B cell (primary cell): ENCODE measurements at regions of chr1 and their contacts with region 1.

Region 1: GRCh38 chr1:110407260-110408210 is at the start of gene LAMTOR5:
- DNase-seq: peak; percentile 94
- ATAC-seq: peak; percentile 92
- H3K4me3 ChIP-seq: peak within 1 kb of the TSS; percentile 76 to 99 (median 90)
- H3K4me3 Mint-ChIP-seq: peak within 1 kb of the TSS; percentile 100
- H3K27ac ChIP-seq: peak within 1 kb of the TSS; percentile 87 to 90
- H3K27ac Mint-ChIP-seq: peak within 1 kb of the TSS; percentile 99
- H3K4me1 ChIP-seq: peaks cover 18 to 23% of the 10 kb centered on the region in 2 donors
- H3K4me1 Mint-ChIP-seq: peaks cover 25% of the 10 kb centered on the region
- H3K27me3 ChIP-seq: no peaks in the 10 kb centered on the region
- H3K27me3 Mint-ChIP-seq: no peaks in the 10 kb centered on the region
- CTCF ChIP-seq: peak; percentile 23
- total RNA-seq, gene LAMTOR5: 145 and 151 TPM in 2 replicates

Region 2: DNA sequence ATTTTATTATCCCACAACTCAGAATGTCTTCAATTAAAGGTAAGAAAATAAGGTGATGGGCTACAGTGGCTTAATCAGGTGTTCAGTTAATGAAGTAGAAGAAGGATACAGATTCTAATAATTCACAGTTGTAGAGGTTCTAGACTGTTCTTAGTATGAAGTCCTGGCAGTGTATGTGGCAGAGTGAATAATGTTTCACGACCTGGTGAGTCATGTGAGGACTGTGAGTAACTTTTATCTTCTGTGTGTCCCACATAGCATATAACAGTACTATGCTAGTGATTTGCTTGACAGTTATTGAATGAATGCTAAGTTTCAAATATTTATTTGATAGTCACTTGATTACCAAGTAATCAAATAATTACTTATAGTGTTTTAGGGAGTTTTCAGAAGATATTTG is 36.7 kb before region 1 on chr1:
- CTCF ChIA-PET with region 1: interaction called, 117 read pairs
- POLR2A ChIA-PET with region 1: no interaction called
- intact Hi-C with region 1: loop called (anchors 5 kb)
- DNase-seq: no peak
- ATAC-seq: no peak
- H3K4me3 ChIP-seq: no peak overlapping the region
- H3K4me3 Mint-ChIP-seq: no peak overlapping the region
- H3K27ac ChIP-seq: no peak overlapping the region
- H3K27ac Mint-ChIP-seq: no peak overlapping the region
- H3K4me1 ChIP-seq: no peaks in the 10 kb centered on the region
- H3K4me1 Mint-ChIP-seq: no peaks in the 10 kb centered on the region
- H3K27me3 ChIP-seq: no peaks in the 10 kb centered on the region
- H3K27me3 Mint-ChIP-seq: no peaks in the 10 kb centered on the region
- CTCF ChIP-seq: no peak

Region 3: DNA sequence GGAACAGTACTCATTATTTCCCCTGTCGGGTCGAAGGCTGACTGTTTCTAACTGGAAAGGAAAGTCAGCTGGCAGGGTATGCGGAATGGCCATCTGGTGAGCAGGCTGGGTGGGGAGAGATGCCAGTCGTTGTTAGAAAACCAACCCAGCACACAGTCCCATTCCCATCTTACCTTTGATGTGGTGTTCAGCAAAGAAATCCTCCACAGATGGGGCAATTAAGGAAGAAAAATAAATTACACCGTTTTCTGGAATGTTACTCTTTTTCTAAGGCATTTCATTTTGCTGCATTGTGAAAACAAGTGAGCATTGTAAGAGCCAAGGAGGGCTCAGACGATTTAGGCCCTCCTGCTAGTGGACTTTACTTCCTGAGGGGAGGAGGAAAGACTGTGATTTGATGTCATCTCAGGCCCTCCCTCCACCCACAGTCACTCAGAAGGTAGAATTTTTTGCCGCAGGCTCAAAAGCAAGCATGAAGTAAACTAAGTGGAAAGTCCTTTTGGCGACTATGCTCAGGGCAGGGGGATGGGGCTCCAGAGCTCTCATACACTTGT is 16.8 kb before region 1 on chr1 and contains the start of gene SLC16A4:
- CTCF ChIA-PET with region 1: interaction called, 117 read pairs
- POLR2A ChIA-PET with region 1: interaction called, 28 read pairs
- intact Hi-C with region 1: loop called (anchors 1 kb)
- DNase-seq: no peak
- ATAC-seq: no peak
- H3K4me3 ChIP-seq: no peak within 1 kb of the TSS
- H3K4me3 Mint-ChIP-seq: no peak within 1 kb of the TSS
- H3K27ac ChIP-seq: no peak within 1 kb of the TSS
- H3K27ac Mint-ChIP-seq: no peak within 1 kb of the TSS
- H3K4me1 ChIP-seq: peaks cover 14 to 27% of the 10 kb centered on the region in 2 donors
- H3K4me1 Mint-ChIP-seq: peaks cover 25% of the 10 kb centered on the region
- H3K27me3 ChIP-seq: no peaks in the 10 kb centered on the region
- H3K27me3 Mint-ChIP-seq: no peaks in the 10 kb centered on the region
- CTCF ChIP-seq: no peak
- total RNA-seq, gene SLC16A4: 1.9 and 2.6 TPM in 2 replicates

Region 4: DNA sequence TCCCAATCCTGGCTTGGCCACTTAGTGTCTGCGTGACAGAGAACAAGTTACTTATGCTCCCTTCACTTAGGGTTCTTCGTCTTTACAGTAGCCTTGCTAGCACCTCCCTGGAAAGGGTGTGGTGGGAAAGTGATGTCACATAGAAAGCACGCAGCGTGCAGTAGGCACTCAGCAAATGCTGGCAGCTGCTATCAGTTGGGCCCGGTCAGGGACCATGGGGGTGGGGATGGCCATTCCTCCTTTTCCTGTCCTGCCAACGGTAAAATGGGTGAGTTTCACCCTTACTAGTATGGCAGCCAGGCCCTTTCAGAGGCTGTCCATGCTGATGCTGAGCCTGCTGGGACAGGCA is 117.7 kb after region 1 on chr1:
- CTCF ChIA-PET with region 1: no interaction called
- POLR2A ChIA-PET with region 1: no interaction called
- intact Hi-C with region 1: no loop called
- DNase-seq: no peak
- ATAC-seq: no peak
- H3K4me3 ChIP-seq: no peak overlapping the region
- H3K4me3 Mint-ChIP-seq: no peak overlapping the region
- H3K27ac ChIP-seq: no peak overlapping the region
- H3K27ac Mint-ChIP-seq: no peak overlapping the region
- H3K4me1 ChIP-seq: peaks cover 3 to 6% of the 10 kb centered on the region in 2 donors
- H3K4me1 Mint-ChIP-seq: peaks cover 3% of the 10 kb centered on the region
- H3K27me3 ChIP-seq: peaks cover 0 to 28% (median 4%) of the 10 kb centered on the region in 4 experiments
- H3K27me3 Mint-ChIP-seq: peaks cover 53% of the 10 kb centered on the region
- CTCF ChIP-seq: no peak

Region 5: GRCh38 chr1:110627764-110628163 is 220.2 kb after region 1 on chr1:
- CTCF ChIA-PET with region 1: no interaction called
- POLR2A ChIA-PET with region 1: no interaction called
- intact Hi-C with region 1: no loop called
- DNase-seq: no peak
- ATAC-seq: no peak
- H3K4me3 ChIP-seq: no peak overlapping the region
- H3K4me3 Mint-ChIP-seq: no peak overlapping the region
- H3K27ac ChIP-seq: no peak overlapping the region
- H3K27ac Mint-ChIP-seq: no peak overlapping the region
- H3K4me1 ChIP-seq: peaks cover 24 to 32% of the 10 kb centered on the region in 2 donors
- H3K4me1 Mint-ChIP-seq: peaks cover 12% of the 10 kb centered on the region
- H3K27me3 ChIP-seq: no peaks in the 10 kb centered on the region
- H3K27me3 Mint-ChIP-seq: no peaks in the 10 kb centered on the region
- CTCF ChIP-seq: no peak